ENCODE measurements at regions of chr10 and their contacts with region 1.

Region 1: DNA sequence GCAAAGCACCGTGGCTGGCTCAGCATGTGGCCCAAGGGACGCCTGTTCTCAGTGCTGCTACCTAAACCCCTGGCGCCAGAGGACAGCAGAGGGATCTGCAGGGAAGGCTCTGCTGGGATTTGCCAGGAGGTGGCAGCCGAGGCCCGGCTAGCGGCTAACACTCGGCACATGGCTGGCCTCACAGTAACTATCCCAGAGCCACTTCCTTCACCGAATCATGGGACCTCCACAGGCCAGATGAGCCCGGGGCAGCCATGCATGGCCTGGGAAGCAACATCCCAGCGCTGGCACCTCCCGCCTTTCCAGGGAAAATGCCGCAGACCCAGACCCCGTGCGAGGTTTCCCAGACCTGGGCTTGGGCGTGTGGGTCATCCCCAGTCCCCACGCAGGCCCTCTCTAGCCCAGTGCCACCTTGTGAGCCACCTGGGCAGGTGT is 36.4 kb downstream of the DPYSL4 start:
- DNase-seq: peak; percentile 91
- H3K4me3 ChIP-seq: no peak overlapping the region
- H3K27ac ChIP-seq: peak overlapping the region in 1 of 8 donors; percentile 11
- H3K4me1 ChIP-seq: peaks cover 2 to 26% (median 13%) of the 10 kb centered on the region in 6 donors
- H3K27me3 ChIP-seq: no peaks in the 10 kb centered on the region
- CTCF ChIP-seq: peak; percentile 84 to 98 (median 91)
- POLR2A ChIP-seq: no peak

Region 2: DNA sequence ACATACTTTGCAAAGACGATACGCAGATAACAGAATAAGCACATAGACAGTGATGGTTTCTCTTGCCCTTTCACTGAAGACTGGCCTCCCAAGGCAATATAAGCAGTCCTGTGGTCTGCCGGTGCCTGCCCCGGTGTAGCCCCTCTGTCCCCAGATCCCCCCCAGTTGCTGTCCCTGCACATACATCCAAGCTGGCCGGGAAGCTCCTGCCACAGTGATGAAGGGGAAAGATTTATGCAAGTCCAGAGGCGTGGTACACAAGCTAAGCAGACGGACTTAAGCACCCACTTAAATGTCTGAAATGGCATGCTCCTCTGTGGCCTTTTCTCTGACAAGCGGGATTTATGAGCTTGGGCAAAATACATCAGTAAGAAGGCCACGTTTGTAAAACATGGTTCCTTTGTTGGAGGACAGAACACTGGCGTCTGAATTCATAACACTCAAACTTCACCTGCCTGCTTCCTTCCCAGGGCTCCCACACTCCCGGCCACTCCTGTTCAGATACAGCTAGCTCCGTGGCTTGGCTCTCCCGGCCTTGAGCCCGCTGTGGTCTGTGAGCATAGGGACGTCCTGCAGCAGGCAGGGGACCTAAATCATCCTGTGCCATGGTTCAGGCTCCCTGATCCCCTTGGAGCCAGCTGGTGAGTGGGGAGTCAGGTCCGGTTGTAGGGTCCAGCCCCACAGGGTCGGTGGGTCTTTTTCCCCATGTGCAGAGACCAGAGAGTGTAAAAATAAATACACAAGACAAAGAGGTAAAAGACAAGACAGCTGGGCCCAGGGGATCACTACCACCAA is 384.0 kb before region 1 on chr10:
- intact Hi-C with region 1: no loop called
- DNase-seq: peak; percentile 41
- H3K4me3 ChIP-seq: no peak overlapping the region
- H3K27ac ChIP-seq: no peak overlapping the region
- H3K4me1 ChIP-seq: no peaks in the 10 kb centered on the region
- H3K27me3 ChIP-seq: peaks cover 0 to 3% (median 0%) of the 10 kb centered on the region in 7 donors
- CTCF ChIP-seq: no peak
- POLR2A ChIP-seq: no peak

Region 3: GRCh38 chr10:131921184-131921583 is 302.0 kb before region 1 on chr10:
- intact Hi-C with region 1: no loop called
- DNase-seq: no peak
- H3K4me3 ChIP-seq: no peak overlapping the region
- H3K27ac ChIP-seq: no peak overlapping the region
- H3K4me1 ChIP-seq: peaks cover 0 to 68% (median 24%) of the 10 kb centered on the region in 6 donors
- H3K27me3 ChIP-seq: no peaks in the 10 kb centered on the region
- CTCF ChIP-seq: no peak
- POLR2A ChIP-seq: no peak

Region 4: DNA sequence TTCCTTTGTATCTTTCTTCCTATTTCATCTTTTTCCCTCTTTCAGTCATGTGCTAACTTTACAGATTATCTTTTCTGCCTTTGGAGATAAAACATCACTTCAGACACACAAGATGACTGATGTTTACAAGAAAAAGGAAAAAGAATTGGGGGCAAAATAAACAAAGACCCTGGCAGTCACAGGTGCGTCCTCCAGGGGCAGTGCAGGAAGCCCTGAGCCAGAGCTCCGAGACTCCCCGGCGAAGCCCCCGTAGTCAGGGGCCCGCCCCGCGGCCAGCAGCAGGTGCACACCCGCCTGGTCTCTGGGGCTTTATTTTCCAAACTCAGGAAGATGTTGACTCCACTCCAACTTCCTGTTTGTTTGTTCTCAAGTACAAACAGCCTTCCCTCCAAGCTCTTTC is 74.4 kb after region 1 on chr10:
- intact Hi-C with region 1: no loop called
- DNase-seq: no peak
- H3K4me3 ChIP-seq: no peak overlapping the region
- H3K27ac ChIP-seq: no peak overlapping the region
- H3K4me1 ChIP-seq: peaks cover 0 to 17% (median 3%) of the 10 kb centered on the region in 6 donors
- H3K27me3 ChIP-seq: peaks cover 0 to 30% (median 0%) of the 10 kb centered on the region in 7 donors
- CTCF ChIP-seq: no peak
- POLR2A ChIP-seq: no peak

Region 5: DNA sequence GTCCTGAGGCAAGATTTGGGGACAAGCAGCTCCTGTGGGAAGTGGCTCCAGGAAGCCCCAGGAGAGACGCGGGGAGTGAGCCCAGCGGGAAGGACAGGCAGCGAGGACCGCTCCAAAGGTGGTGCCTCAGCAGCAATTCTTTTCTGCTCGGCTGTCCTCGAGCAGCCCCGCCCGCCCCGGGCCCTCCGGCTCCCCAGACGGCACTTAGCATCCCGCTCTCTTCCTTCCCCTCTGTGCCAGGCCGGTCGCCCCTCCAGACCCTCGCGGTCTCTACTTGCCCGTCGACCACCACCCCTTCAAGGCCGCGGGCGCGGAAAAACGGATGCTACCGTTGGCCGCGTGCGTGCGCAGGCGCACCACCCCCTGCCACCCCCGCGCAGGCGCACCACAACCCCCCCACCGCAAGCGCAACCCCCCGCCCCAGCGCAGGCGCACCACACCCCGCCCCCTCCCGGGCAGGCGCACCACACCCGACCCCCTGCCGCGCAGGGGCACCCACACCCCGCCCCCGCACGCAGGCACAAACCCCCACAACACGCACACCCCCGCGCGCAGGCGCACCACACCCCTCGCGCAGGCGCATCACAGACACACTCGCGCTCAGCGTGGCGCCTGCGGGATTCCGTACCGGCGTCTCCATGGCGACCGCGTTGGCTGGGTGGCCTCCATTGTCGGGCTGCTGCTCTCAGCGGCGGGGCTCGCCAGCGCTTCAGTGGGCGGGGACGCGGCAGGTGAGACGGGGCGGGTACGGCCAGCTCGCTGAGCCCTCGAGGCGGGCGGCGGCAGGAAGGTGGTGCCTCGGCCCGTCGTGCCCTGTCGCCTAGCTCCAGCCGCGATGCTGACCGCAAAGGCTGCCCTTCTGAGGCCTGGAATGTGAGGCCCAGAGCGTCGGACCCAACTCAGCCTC is 108.6 kb after region 1 on chr10 and contains the start of gene LRRC27:
- intact Hi-C with region 1: no loop called
- DNase-seq: peak; percentile 100
- H3K4me3 ChIP-seq: peak within 1 kb of the TSS; percentile 70 to 95 (median 87)
- H3K27ac ChIP-seq: peak within 1 kb of the TSS; percentile 82 to 97 (median 89)
- H3K4me1 ChIP-seq: peaks cover 11 to 90% (median 61%) of the 10 kb centered on the region in 6 donors
- H3K27me3 ChIP-seq: no peaks in the 10 kb centered on the region
- CTCF ChIP-seq: no peak
- POLR2A ChIP-seq: peak in 2 of 3 donors; percentile 45 to 68
- total RNA-seq, gene LRRC27: 11.9 to 29.9 (median 19.4) TPM

Region 6: DNA sequence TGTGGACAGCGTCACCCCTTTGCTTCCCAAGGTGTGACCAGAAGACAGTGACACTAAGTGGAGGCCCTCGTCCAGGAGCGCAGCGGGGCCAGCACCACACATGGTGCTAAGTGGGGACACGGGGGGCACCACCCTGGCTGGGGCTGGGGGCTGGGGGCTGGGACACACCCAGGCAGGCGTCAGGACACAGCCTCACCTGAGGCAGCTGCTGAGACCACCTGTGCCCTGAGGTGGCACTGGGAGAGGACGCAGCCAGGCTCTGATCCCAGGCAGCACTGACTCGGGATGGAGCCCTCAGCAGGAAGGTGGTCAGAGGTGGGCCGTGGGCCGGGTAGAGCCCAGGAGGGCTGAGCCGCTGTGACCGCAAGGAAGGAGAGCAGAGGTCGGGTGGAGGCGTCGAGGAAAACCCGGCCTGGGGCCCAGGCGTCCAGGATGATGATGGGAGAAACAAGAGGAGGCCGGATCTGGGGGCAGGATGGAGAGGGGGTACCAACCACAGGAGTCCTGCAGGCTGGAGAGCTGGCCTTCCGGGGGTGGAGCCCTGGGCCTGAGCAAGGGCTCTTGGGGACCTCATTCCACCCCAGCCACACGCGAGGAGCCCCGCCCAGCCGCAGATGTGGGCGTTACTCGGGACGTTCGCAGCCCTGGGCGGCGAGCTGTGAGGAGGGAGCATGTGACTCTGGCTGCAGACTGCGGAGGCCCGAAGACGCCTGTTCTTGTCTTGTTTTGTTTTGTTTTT is 131.4 kb after region 1 on chr10:
- intact Hi-C with region 1: loop called (anchors 5 kb)
- DNase-seq: peak; percentile 73
- H3K4me3 ChIP-seq: no peak overlapping the region
- H3K27ac ChIP-seq: no peak overlapping the region
- H3K4me1 ChIP-seq: peaks cover 0 to 26% (median 6%) of the 10 kb centered on the region in 6 donors
- H3K27me3 ChIP-seq: no peaks in the 10 kb centered on the region
- CTCF ChIP-seq: no peak
- POLR2A ChIP-seq: no peak